ENCODE measurements at regions of chr2 and their contacts with region 1.

Region 1: DNA sequence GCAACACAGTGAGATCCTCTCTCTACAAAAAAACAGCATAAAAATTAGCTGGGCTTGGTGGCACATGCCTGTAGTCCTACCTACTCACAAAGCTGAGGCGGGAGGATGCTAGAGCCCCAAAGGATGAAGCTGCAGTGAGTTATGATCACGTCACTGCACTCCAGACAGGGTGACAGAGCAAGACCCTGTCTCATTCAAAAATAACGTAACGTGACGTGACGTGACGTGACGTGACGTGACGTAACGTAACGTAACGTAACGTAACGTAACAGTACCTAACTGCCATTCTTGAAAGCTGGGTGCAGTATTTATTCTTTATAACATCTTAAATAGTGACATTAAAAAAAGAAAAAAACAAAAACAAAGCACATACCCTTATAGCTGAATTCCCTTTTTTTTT is 51.7 kb downstream of the NOL10 start:
- DNase-seq: no peak
- H3K4me3 Mint-ChIP-seq: no peak overlapping the region
- H3K27ac Mint-ChIP-seq: no peak overlapping the region
- H3K4me1 Mint-ChIP-seq: no peaks in the 10 kb centered on the region
- H3K27me3 Mint-ChIP-seq: no peaks in the 10 kb centered on the region
- CTCF ChIP-seq: no peak

Region 2: DNA sequence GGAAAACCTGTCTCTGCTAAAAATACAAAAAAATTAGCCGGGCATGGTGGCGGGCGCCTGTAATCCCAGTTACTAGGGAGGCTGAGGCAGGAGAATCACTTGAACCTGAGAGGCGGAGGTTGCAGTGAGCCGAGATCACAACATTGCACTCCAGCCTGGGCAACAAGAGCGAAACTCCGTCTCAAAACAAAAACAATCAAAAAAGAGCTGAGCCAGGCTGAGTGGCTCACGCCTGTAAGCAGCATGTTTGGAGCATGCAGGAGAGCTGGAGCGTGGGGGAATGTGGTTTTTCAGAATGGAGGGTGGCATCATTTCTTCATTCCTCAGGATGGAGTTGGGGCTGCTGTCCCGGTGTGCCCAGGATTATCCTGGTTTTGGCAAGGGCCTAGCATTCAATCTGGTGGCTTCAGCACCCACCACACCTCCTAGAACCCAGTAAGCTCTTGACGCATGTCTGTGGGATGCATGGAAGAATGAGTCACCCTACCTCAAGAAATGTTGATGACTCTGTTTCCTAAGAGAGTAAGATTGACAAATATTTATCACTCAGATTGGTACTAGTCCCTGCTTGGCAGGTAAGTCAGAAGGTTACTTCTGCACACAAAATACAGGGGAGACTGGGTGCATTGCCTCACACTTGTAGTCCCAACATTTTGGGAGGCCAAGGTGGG is 99.7 kb before region 1 on chr2:
- CTCF ChIA-PET with region 1: no interaction called
- intact Hi-C with region 1: no loop called
- DNase-seq: no peak
- H3K4me3 Mint-ChIP-seq: no peak overlapping the region
- H3K27ac Mint-ChIP-seq: no peak overlapping the region
- H3K4me1 Mint-ChIP-seq: peaks cover 22% of the 10 kb centered on the region
- H3K27me3 Mint-ChIP-seq: no peaks in the 10 kb centered on the region
- CTCF ChIP-seq: no peak

Region 3: GRCh38 chr2:10604604-10605003 is 33.5 kb before region 1 on chr2:
- CTCF ChIA-PET with region 1: interaction called, 14 read pairs
- intact Hi-C with region 1: no loop called
- DNase-seq: no peak
- H3K4me3 Mint-ChIP-seq: no peak overlapping the region
- H3K27ac Mint-ChIP-seq: no peak overlapping the region
- H3K4me1 Mint-ChIP-seq: no peaks in the 10 kb centered on the region
- H3K27me3 Mint-ChIP-seq: no peaks in the 10 kb centered on the region
- CTCF ChIP-seq: no peak